Activated T-helper 2 cell treated with anti-CD3 and anti-CD28 coated beads, Interferon-gamma antibody, Interleukin-2, Interleukin-4, amounts not matched to agents 10 μg/mL and 5 μg/mL and 100 μg/mL, durations not matched to agents 14 hours and 24 hours and 36 hours (primary cell): ENCODE measurements at regions of chr12 and their contacts with region 1.

Region 1: DNA sequence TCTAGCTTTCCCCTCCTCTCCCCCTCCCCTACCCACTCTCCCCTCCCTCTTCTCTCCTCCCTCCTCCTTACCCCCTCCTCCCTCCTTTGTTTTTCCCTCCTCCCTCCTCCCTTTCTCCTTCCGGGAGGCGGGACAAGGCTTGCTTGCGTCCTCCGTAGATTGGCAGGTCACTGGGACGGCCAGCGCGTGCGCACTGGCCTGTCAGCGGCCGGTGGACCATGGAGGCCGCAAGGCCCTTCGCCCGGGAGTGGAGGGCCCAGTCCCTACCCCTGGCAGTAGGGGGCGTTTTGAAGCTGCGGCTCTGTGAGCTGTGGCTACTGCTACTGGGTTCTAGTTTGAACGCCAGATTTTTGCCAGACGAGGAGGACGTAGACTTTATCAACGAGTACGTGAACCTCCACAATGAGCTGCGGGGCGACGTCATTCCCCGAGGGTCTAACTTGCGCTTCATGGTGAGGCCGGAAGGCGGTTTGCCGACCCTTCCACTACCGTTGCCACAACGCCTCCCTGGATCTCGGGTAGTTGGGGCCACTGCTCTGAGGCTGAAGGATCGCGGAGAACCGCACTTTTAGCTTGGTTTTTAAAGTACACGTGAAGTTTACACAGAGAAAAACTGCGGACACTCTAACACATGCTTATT is at the start of gene GLIPR1L2:
- DNase-seq: peak; percentile 82
- H3K4me3 Mint-ChIP-seq: peak within 1 kb of the TSS; percentile 87
- H3K27ac Mint-ChIP-seq: peak within 1 kb of the TSS; percentile 86
- H3K4me1 Mint-ChIP-seq: peaks cover 27% of the 10 kb centered on the region
- H3K27me3 Mint-ChIP-seq: no peaks in the 10 kb centered on the region
- total RNA-seq, gene GLIPR1L2: not detected in 2 replicates

Region 2: DNA sequence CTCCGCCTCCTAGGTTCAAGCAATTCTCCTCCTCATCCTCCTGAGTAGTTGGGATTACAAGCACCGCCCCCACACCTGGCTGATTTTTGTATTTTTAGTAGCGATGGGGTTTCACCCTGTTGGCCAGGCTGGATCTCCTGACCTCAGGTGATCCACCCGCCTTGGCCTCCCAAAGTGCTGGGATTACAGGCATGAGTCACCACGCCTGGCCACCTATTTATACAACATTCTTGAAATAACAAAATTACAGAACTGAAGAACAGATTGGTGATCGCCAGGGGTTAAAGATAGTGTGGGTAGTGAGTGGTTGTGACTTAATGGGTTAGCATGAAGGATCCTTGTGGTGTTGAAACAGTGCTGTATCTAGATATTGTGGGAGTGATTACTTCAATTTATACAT is 49.2 kb before region 1 on chr12:
- intact Hi-C with region 1: loop called (anchors 5 kb)
- DNase-seq: no peak
- H3K4me3 Mint-ChIP-seq: no peak overlapping the region
- H3K27ac Mint-ChIP-seq: no peak overlapping the region
- H3K4me1 Mint-ChIP-seq: peaks cover 28% of the 10 kb centered on the region
- H3K27me3 Mint-ChIP-seq: peaks cover 43% of the 10 kb centered on the region

Region 3: DNA sequence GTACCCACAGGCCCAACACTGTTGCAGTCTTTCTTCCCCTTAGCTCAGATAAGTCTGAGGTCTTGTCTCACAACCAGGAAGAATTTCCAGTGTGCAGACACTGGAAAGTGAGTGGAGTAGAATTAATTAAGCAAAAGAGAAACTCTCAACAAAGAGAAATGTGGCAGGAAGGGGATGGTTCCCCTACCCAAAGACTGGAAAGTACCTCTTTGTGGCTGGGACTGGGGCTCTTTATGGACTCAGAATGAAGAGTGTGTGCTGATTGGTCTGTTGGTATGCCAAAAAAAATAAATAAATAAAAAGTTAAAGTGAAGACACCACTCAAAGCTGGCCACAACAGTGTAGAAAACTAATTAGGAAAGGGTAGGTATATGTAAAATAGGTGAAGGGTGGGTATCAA is 30.1 kb before region 1 on chr12:
- intact Hi-C with region 1: no loop called
- DNase-seq: no peak
- H3K4me3 Mint-ChIP-seq: no peak overlapping the region
- H3K27ac Mint-ChIP-seq: no peak overlapping the region
- H3K4me1 Mint-ChIP-seq: peaks cover 10% of the 10 kb centered on the region
- H3K27me3 Mint-ChIP-seq: peaks cover 3% of the 10 kb centered on the region

Region 4: DNA sequence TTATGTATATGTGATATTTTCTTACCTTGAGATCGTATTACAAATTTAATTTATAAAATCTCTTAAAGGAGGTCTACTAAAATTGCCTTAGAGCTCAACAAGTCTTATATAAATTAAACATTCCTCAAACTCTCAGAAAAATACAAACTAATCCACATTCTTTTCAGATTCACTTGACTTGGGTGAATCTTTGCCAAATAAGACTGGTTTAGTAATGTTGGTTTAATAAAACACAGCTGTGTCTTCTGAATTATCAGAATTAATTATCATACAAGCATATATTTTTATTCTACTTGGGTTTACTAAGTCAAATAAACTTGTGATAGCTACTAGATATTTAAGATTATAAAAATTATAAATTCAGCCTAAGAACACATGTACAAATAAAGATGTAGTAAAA is 13.2 kb after region 1 on chr12:
- intact Hi-C with region 1: no loop called
- DNase-seq: no peak
- H3K4me3 Mint-ChIP-seq: no peak overlapping the region
- H3K27ac Mint-ChIP-seq: no peak overlapping the region
- H3K4me1 Mint-ChIP-seq: no peaks in the 10 kb centered on the region
- H3K27me3 Mint-ChIP-seq: peaks cover 8% of the 10 kb centered on the region

Region 5: GRCh38 chr12:75766263-75767160 is 375.5 kb after region 1 on chr12:
- intact Hi-C with region 1: no loop called
- DNase-seq: no peak
- H3K4me3 Mint-ChIP-seq: no peak overlapping the region
- H3K27ac Mint-ChIP-seq: no peak overlapping the region
- H3K4me1 Mint-ChIP-seq: peaks cover 13% of the 10 kb centered on the region
- H3K27me3 Mint-ChIP-seq: peaks cover 40% of the 10 kb centered on the region